ENCODE measurements at regions of chr6 and their contacts with region 1.

Region 1: DNA sequence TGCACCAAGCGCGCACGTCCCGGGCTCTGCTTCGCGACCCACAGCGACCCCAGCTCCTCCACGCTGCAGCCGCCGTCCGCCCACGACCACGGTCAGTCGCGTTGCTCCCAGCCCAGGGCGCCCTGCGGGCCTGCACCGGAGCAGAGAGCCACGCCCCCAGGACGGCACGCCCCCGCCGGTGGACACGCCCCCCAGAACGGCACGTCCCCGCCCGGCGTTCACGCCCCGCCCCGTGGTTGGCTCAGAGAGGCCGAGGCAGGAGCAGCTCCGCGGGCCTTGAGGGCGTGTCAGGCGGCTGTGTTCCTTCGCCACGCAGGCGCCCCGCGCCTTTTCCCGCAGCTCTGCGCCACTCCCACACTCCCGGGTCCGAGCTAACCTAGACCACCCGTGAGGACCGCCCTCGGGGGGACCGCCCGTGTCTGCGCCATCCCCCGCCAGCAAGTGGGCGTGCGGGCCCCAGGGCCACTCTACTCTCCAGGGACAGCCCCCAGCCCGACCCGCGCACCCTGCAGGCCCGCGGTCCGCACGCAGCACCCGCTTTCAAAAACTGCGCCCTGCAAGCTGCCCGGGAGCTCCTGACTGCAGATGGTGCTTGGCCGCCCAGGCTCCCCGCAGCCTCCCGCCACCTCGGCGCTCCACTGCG is at the start of gene RNASET2:
- H3K4me3 Mint-ChIP-seq: peak within 1 kb of the TSS; percentile 91
- H3K27ac Mint-ChIP-seq: peak within 1 kb of the TSS; percentile 94
- H3K4me1 Mint-ChIP-seq: peaks cover 80% of the 10 kb centered on the region
- H3K27me3 Mint-ChIP-seq: no peaks in the 10 kb centered on the region

Region 2: DNA sequence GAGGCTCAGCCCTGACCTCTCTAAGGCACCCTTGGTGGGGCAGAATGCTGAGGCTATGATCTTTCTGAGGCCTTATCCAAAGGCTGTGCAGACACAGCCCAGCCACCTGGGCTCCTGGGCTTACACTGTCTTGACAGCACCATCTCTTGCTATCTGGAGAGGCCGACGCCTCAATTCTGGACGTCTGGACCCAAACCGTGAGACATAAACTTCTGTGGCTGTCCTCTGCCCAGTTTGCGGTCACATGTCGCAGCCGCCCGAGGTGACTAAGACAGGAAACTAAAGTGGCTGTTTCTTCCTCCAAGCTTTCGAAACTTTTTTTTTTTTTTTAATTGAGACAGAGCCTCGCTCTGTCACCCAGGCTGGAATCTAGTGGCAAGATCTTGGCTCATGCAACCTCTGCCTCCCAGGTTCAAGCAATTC is 697.7 kb before region 1 on chr6:
- intact Hi-C with region 1: loop called (anchors 5 kb)
- H3K4me3 Mint-ChIP-seq: peak overlapping the region; percentile 68
- H3K27ac Mint-ChIP-seq: peak overlapping the region; percentile 100
- H3K4me1 Mint-ChIP-seq: peaks cover 62% of the 10 kb centered on the region
- H3K27me3 Mint-ChIP-seq: no peaks in the 10 kb centered on the region

Region 3: GRCh38 chr6:166351715-166352285 is 604.8 kb before region 1 on chr6:
- intact Hi-C with region 1: no loop called
- H3K4me3 Mint-ChIP-seq: peak overlapping the region; percentile 32
- H3K27ac Mint-ChIP-seq: peak overlapping the region; percentile 84
- H3K4me1 Mint-ChIP-seq: peaks cover 42% of the 10 kb centered on the region
- H3K27me3 Mint-ChIP-seq: no peaks in the 10 kb centered on the region

Region 4: GRCh38 chr6:166627033-166627874 is 329.3 kb before region 1 on chr6 and contains the start of gene RPS6KA2:
- intact Hi-C with region 1: loop called (anchors 2 kb)
- H3K4me3 Mint-ChIP-seq: peak within 1 kb of the TSS; percentile 88
- H3K27ac Mint-ChIP-seq: peak within 1 kb of the TSS; percentile 94
- H3K4me1 Mint-ChIP-seq: peaks cover 30% of the 10 kb centered on the region
- H3K27me3 Mint-ChIP-seq: peaks cover 51% of the 10 kb centered on the region

Region 5: GRCh38 chr6:166989427-166990032 is 33.0 kb after region 1 on chr6:
- intact Hi-C with region 1: loop called (anchors 2 kb)
- H3K4me3 Mint-ChIP-seq: no peak overlapping the region
- H3K27ac Mint-ChIP-seq: no peak overlapping the region
- H3K4me1 Mint-ChIP-seq: peaks cover 18% of the 10 kb centered on the region
- H3K27me3 Mint-ChIP-seq: no peaks in the 10 kb centered on the region

Region 6: DNA sequence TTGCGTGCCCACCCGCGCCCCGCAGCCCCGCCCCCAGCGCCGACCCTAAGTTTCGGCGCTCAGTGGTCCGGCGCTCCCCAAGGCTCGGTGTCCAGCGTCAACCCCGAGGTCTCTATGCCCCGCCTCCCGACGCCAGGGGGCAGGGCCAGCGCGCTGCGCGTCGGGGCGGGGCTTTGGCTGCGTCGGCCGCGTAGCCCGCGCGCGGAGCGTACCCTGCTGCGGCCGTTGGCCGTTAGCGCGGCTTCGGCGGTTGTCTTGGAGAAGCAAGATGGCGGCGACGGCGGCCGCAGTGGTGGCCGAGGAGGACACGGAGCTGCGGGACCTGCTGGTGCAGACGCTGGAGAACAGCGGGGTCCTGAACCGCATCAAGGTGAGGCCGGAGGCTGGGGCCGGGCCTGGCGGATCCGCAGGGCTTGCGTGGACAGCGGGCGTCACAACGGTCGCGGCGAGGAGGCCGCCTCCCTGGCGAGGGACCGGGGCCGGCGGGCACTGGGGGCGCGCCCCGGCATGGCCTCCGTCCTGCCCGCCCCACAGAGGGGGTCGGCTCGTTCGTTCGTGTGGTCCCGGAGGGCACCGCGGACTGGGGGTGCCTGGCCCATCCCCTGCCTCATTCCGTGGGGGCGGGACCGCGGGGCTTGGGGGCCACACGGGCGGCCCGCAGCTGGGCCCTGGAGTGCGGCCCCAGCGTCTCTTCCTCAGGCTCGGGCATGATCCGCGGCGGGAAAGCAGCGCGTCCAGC is 42.7 kb after region 1 on chr6 and contains the start of gene CEP43:
- intact Hi-C with region 1: loop called (anchors 1 kb)
- H3K4me3 Mint-ChIP-seq: peak within 1 kb of the TSS; percentile 88
- H3K27ac Mint-ChIP-seq: peak within 1 kb of the TSS; percentile 76
- H3K4me1 Mint-ChIP-seq: peaks cover 32% of the 10 kb centered on the region
- H3K27me3 Mint-ChIP-seq: no peaks in the 10 kb centered on the region

Region 7: GRCh38 chr6:167093922-167094432 is 137.4 kb after region 1 on chr6:
- intact Hi-C with region 1: loop called (anchors 5 kb)
- H3K4me3 Mint-ChIP-seq: peak overlapping the region; percentile 23
- H3K27ac Mint-ChIP-seq: peak overlapping the region; percentile 88
- H3K4me1 Mint-ChIP-seq: peaks cover 71% of the 10 kb centered on the region
- H3K27me3 Mint-ChIP-seq: peaks cover 7% of the 10 kb centered on the region

Measured in dendritic cell treated with granulocyte-macrophage colony-stimulating factor and Interleukin-4, amounts not matched to agents 40 ng/mL and 50 ng/mL, for 4 days (primary cell).